ENCODE measurements at regions of chr20 and their contacts with region 1.

Region 1: GRCh38 chr20:33992923-33993575 is 662 bp upstream of the RALY start:
- DNase-seq: peak; percentile 99 to 100 (median 99)
- ATAC-seq: peak; percentile 82
- H3K4me3 ChIP-seq: peak overlapping the region; percentile 97
- H3K4me3 Mint-ChIP-seq: peak overlapping the region; percentile 100
- H3K27ac ChIP-seq: peak overlapping the region; percentile 91 to 92
- H3K27ac Mint-ChIP-seq: peak overlapping the region; percentile 99
- H3K4me1 ChIP-seq: peaks cover 51% of the 10 kb centered on the region
- H3K4me1 Mint-ChIP-seq: peaks cover 68% of the 10 kb centered on the region
- H3K27me3 ChIP-seq: no peaks in the 10 kb centered on the region
- H3K27me3 Mint-ChIP-seq: no peaks in the 10 kb centered on the region
- CTCF ChIP-seq: no peak

Region 2: GRCh38 chr20:32819992-32820710 is 1172.9 kb before region 1 on chr20:
- CTCF ChIA-PET with region 1: no interaction called
- POLR2A ChIA-PET with region 1: no interaction called
- intact Hi-C with region 1: loop called in 1 of 2 experiments (anchors 10 kb)
- DNase-seq: peak in 13 of 14 experiments; percentile 55 to 93 (median 85)
- ATAC-seq: peak; percentile 72
- H3K4me3 ChIP-seq: peak overlapping the region; percentile 75
- H3K4me3 Mint-ChIP-seq: peak overlapping the region; percentile 99
- H3K27ac ChIP-seq: peak overlapping the region; percentile 77 to 91
- H3K27ac Mint-ChIP-seq: peak overlapping the region; percentile 98
- H3K4me1 ChIP-seq: peaks cover 50% of the 10 kb centered on the region
- H3K4me1 Mint-ChIP-seq: peaks cover 44% of the 10 kb centered on the region
- H3K27me3 ChIP-seq: no peaks in the 10 kb centered on the region
- H3K27me3 Mint-ChIP-seq: no peaks in the 10 kb centered on the region
- CTCF ChIP-seq: no peak

Region 3: GRCh38 chr20:33719989-33720709 is 272.9 kb before region 1 on chr20 and contains the start of gene PXMP4:
- CTCF ChIA-PET with region 1: no interaction called
- POLR2A ChIA-PET with region 1: interaction called, 10 read pairs
- intact Hi-C with region 1: no loop called
- DNase-seq: peak; percentile 68 to 97 (median 82)
- ATAC-seq: peak; percentile 94
- H3K4me3 ChIP-seq: peak within 1 kb of the TSS; percentile 66
- H3K4me3 Mint-ChIP-seq: peak within 1 kb of the TSS; percentile 83
- H3K27ac ChIP-seq: peak within 1 kb of the TSS; percentile 2 to 72
- H3K27ac Mint-ChIP-seq: peak within 1 kb of the TSS; percentile 60
- H3K4me1 ChIP-seq: peaks cover 20% of the 10 kb centered on the region
- H3K4me1 Mint-ChIP-seq: peaks cover 18% of the 10 kb centered on the region
- H3K27me3 ChIP-seq: no peaks in the 10 kb centered on the region
- H3K27me3 Mint-ChIP-seq: no peaks in the 10 kb centered on the region
- CTCF ChIP-seq: peak; percentile 13
- total RNA-seq, gene PXMP4: 3.6 to 4.1 TPM

Region 4: DNA sequence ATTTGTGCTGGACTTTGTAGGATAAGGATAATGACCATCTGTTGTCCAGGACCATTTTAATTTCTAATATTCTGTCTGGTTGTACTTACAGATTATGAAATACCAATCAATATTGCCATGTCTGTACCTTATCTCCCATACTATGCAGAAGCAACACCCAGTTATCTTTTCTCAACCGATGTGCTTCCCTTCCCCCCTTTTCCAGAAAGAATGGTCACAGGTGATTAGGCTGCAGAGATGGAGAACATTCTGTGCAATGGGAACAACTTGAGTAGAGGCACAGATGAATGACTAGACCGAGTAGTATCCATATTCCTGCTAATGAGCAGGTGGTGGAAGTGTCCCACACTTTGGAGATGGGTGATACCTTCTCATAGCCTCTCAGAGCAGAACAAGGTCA is 11.2 kb after region 1 on chr20:
- CTCF ChIA-PET with region 1: no interaction called
- POLR2A ChIA-PET with region 1: interaction called, 17 read pairs
- intact Hi-C with region 1: loop called in 1 of 2 experiments (anchors 1 kb)
- DNase-seq: no peak
- ATAC-seq: no peak
- H3K4me3 ChIP-seq: no peak overlapping the region
- H3K4me3 Mint-ChIP-seq: peak overlapping the region; percentile 3
- H3K27ac ChIP-seq: no peak overlapping the region
- H3K27ac Mint-ChIP-seq: no peak overlapping the region
- H3K4me1 ChIP-seq: peaks cover 46% of the 10 kb centered on the region
- H3K4me1 Mint-ChIP-seq: peaks cover 95% of the 10 kb centered on the region
- H3K27me3 ChIP-seq: no peaks in the 10 kb centered on the region
- H3K27me3 Mint-ChIP-seq: no peaks in the 10 kb centered on the region
- CTCF ChIP-seq: no peak

Region 5: DNA sequence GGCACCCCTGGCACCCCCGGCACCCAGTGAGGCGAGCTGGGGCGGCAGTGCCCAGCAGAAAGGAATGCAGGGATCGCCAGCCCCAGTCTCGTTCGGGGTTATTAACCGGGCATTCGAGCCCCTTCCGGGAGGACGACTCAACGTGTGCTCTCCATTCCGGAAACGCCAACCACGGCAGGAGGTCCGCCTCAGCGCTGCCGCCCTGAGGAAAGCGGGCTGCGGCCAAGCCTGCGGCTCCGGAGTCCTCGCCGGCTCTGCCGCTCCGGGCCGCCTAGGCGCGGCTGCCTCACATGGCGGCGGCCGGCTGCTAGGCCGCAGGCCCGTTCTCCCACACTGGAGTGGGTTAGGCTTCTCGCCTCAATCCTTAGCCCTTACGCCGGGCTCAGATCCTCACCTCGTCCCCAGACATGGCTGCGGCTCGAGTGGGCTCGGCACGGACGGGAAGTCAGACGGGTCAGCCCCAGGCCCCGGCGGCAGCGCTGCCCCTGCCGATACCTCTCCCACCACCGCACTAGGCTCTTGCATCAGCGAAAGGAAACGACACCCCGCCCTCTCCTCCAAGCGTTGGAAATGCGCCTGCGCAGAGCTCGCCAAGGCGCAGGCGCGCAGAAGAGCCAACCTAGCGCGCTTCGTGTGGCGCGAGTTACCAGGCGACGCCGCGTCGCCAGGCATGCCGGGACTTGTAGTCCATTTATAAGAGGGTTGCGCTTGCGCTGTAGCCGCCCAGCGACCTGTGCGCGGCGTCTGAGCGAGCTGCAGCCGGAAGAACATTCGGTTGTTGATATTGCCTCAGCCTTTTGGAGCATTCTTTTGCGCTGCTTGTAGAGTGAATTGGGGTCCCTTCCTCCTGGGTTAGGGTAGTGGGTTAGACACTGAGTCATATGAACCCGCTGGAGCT is 118.9 kb after region 1 on chr20 and contains the start of gene EIF2S2:
- CTCF ChIA-PET with region 1: interaction called, 3 read pairs
- POLR2A ChIA-PET with region 1: interaction called, 95 read pairs
- intact Hi-C with region 1: loop called (anchors 2 to 5 kb)
- DNase-seq: peak; percentile 91 to 100 (median 96)
- ATAC-seq: peak; percentile 87
- H3K4me3 ChIP-seq: peak within 1 kb of the TSS; percentile 93
- H3K4me3 Mint-ChIP-seq: peak within 1 kb of the TSS; percentile 96
- H3K27ac ChIP-seq: peak within 1 kb of the TSS; percentile 92
- H3K27ac Mint-ChIP-seq: peak within 1 kb of the TSS; percentile 95
- H3K4me1 ChIP-seq: peaks cover 37% of the 10 kb centered on the region
- H3K4me1 Mint-ChIP-seq: peaks cover 48% of the 10 kb centered on the region
- H3K27me3 ChIP-seq: no peaks in the 10 kb centered on the region
- H3K27me3 Mint-ChIP-seq: no peaks in the 10 kb centered on the region
- CTCF ChIP-seq: no peak
- total RNA-seq, gene EIF2S2: 21.8 to 23.2 TPM

Region 6: DNA sequence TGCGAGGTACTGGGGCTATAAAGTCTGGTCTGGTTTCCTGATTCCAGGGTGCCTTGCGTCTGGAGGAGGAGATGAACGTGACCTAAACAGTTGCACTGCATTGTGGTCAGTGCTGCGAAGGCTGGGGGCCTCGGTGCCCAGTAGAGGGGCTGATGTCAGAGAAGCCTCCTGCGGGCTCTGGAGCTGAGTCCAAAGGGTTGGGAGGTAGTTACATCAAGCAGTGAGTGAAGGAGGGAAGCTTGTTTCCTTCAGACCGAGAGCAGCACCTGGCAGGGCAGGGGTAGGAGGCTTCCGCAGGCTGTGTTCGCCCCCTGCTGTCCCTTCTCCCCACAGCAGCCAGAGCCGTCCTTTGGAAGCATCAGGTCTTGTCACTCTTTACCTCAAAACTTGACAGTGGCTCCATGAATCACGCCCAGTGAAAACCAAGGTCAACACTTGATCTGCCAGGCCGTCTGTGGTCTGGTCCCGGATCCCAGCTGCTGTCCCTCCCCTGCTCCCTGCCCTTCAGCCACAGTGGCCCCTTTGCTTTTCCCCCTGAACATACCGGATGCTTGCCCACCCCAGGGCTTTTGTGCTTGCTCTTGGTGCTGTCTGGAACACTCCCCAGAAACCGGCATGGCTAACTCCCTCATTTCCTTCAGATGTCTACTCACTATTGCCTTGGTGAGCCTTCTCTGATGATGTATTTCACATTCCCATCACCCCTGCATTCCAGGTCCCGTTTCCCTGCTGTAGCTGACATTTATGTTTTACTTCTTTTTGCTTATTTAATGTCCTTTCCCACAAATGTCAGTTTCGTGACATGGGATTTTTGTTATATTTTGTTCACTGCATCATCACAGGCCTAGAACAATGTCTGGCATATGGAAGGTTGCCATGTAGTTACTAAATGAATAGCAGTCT is 530.2 kb after region 1 on chr20:
- CTCF ChIA-PET with region 1: no interaction called
- POLR2A ChIA-PET with region 1: no interaction called
- intact Hi-C with region 1: no loop called
- DNase-seq: peak; percentile 26 to 73 (median 44)
- ATAC-seq: peak; percentile 95
- H3K4me3 ChIP-seq: no peak overlapping the region
- H3K4me3 Mint-ChIP-seq: no peak overlapping the region
- H3K27ac ChIP-seq: no peak overlapping the region
- H3K27ac Mint-ChIP-seq: peak overlapping the region; percentile 12
- H3K4me1 ChIP-seq: peaks cover 22% of the 10 kb centered on the region
- H3K4me1 Mint-ChIP-seq: peaks cover 59% of the 10 kb centered on the region
- H3K27me3 ChIP-seq: no peaks in the 10 kb centered on the region
- H3K27me3 Mint-ChIP-seq: no peaks in the 10 kb centered on the region
- CTCF ChIP-seq: peak; percentile 52

Region 7: GRCh38 chr20:34876162-34877001 is 883.3 kb after region 1 on chr20 and contains the start of gene ACSS2:
- CTCF ChIA-PET with region 1: no interaction called
- POLR2A ChIA-PET with region 1: no interaction called
- intact Hi-C with region 1: loop called in 1 of 2 experiments (anchors 10 kb)
- DNase-seq: peak; percentile 91 to 99 (median 94)
- ATAC-seq: peak; percentile 81
- H3K4me3 ChIP-seq: peak within 1 kb of the TSS; percentile 70
- H3K4me3 Mint-ChIP-seq: peak within 1 kb of the TSS; percentile 90
- H3K27ac ChIP-seq: peak within 1 kb of the TSS; percentile 11 to 42
- H3K27ac Mint-ChIP-seq: peak within 1 kb of the TSS; percentile 81
- H3K4me1 ChIP-seq: peaks cover 51% of the 10 kb centered on the region
- H3K4me1 Mint-ChIP-seq: peaks cover 66% of the 10 kb centered on the region
- H3K27me3 ChIP-seq: no peaks in the 10 kb centered on the region
- H3K27me3 Mint-ChIP-seq: no peaks in the 10 kb centered on the region
- CTCF ChIP-seq: no peak
- total RNA-seq, gene ACSS2: 15.6 to 18.8 TPM

Region 8: DNA sequence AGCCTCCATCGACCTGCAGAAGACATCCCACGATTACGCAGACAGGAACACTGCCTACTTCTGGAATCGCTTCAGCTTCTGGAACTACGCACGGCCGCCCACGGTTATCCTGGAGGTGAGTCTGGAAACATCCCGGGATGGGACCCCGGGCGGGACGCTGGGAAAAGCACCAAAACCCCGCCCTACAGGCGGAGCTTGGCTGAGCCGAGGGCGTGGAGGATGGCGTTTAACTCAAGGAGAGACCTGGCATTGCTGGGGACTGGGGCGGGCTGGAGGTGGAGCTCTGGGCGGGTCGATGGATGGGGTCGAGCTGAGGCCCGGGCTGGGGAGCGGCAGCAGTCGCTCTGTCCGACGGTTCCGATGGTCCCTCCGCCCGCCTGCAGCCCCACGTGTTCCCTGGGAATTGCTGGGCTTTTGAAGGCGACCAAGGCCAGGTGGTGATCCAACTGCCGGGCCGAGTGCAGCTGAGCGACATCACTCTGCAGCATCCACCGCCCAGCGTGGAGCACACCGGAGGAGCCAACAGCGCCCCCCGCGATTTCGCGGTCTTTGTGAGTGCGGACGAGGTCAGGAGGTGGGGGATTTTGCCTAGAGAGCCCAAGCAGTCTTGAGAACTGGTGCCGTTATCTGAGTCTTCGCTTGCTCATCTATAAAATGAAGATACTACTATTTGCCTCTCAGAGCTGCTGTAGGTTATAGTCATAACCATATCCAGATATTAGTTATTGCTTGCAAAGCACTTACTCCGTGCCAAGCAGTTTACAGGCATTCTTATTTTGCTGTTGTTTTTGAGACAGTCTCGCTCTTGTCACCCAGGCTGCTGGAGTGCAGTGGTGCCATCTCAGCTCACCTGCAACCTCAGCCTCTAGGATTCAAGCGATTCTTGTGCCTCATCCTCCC is 1626.4 kb after region 1 on chr20:
- CTCF ChIA-PET with region 1: no interaction called
- POLR2A ChIA-PET with region 1: no interaction called
- intact Hi-C with region 1: loop called in 1 of 2 experiments (anchors 5 kb)
- DNase-seq: peak; percentile 50 to 91 (median 68)
- ATAC-seq: peak; percentile 9
- H3K4me3 ChIP-seq: peak overlapping the region; percentile 66
- H3K4me3 Mint-ChIP-seq: peak overlapping the region; percentile 91
- H3K27ac ChIP-seq: peak overlapping the region in 1 of 2 donors; percentile 15
- H3K27ac Mint-ChIP-seq: peak overlapping the region; percentile 94
- H3K4me1 ChIP-seq: peaks cover 45% of the 10 kb centered on the region
- H3K4me1 Mint-ChIP-seq: peaks cover 39% of the 10 kb centered on the region
- H3K27me3 ChIP-seq: no peaks in the 10 kb centered on the region
- H3K27me3 Mint-ChIP-seq: no peaks in the 10 kb centered on the region
- CTCF ChIP-seq: peak; percentile 59